ENCODE measurements at regions of chr1 and their contacts with region 1.

Region 1: DNA sequence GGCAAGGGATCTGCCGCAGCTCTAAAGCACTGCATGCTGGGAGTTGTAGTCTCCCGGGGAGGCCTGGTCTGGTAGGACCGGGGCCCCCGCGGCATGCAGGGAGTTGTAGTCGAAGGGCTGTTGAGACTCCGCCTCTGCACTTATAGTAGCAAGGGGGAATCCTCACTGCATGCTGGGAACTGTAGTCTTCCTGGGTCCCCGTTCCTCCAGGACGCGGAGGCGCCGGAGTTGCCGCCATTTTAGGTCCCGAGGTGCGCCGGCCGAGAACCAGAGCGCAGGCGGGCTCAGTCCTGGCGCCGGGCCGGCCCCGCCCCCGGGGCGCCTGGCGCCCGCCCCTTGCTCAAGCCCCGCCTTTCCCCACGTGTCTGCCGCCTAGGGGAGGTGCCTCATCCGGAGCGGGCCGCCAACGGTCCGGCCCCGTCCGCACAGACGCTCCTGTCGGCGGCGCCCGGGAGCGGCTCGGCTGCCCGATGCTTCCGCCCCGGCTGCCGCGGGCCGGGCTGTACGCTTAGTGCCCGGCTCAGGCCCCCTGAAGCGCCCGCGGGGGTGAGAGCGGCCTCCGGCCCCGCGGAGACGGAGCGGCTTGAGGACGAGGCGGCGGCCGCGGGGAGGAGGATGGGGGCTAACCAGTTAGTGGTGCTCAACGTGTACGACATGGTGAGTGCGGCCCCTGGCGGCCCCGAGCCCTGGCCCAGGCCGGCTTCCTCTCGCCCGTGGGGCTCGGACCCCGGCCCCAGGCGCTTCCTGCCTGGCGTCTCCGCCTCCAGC is at the start of gene DESI2:
- DNase-seq: peak; percentile 94 to 100 (median 99)

Region 2: GRCh38 chr1:244171241-244171985 is 481.5 kb before region 1 on chr1:
- intact Hi-C with region 1: no loop called
- DNase-seq: peak in 39 of 42 donors; percentile 8 to 67 (median 38)

Region 3: GRCh38 chr1:244599937-244600350 is 52.9 kb before region 1 on chr1:
- intact Hi-C with region 1: loop called (anchors 5 kb)
- DNase-seq: no peak

Region 4: GRCh38 chr1:244970661-244971551 is 318.0 kb after region 1 on chr1:
- intact Hi-C with region 1: loop called (anchors 5 kb)
- DNase-seq: peak; percentile 86 to 98 (median 96)

Region 5: GRCh38 chr1:246566128-246566812 is 1913.4 kb after region 1 on chr1 and contains the starts of genes CNST and TFB2M:
- intact Hi-C with region 1: loop called (anchors 5 kb)
- DNase-seq: peak; percentile 93 to 99 (median 97)

Measured in head of caudate nucleus (tissue), 42 donors.